Psoas muscle (tissue), 8 donors: ENCODE measurements at regions of chr21 and their contacts with region 1.

Region 1: GRCh38 chr21:35051287-35051818 is 2.3 kb upstream of the RUNX1 start:
- DNase-seq: peak; percentile 88 to 94
- ATAC-seq: peak; percentile 75 to 86 (median 80)
- H3K4me3 ChIP-seq: peak overlapping the region; percentile 41
- H3K27ac ChIP-seq: peak overlapping the region; percentile 96
- H3K4me1 ChIP-seq: peaks cover 39% of the 10 kb centered on the region
- H3K27me3 ChIP-seq: no peaks in the 10 kb centered on the region
- CTCF ChIP-seq: peak; percentile 71

Region 2: DNA sequence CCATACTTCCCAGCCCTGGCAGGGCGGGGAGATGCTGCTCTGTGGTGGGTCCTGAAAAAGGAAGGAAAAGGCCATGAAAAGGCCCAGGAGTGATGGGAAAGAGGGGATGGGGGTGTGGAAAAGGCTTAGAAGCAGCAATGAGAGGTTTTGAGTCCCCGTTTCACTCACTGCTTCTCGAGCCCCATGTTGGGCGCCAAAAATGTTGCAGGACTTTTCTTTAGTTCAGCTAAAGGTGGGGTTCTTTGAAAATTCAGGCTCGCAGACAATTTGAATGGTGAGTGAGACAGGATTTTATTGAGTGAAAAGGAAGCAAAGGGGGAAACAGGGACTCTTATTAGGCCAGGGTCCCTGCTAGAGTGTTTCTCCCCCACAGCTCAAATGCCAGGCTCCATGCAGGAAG is 884.9 kb before region 1 on chr21:
- intact Hi-C with region 1: no loop called
- DNase-seq: no peak
- ATAC-seq: no peak
- H3K4me3 ChIP-seq: no peak overlapping the region
- H3K27ac ChIP-seq: no peak overlapping the region
- H3K4me1 ChIP-seq: no peaks in the 10 kb centered on the region
- H3K27me3 ChIP-seq: no peaks in the 10 kb centered on the region
- CTCF ChIP-seq: no peak

Region 3: DNA sequence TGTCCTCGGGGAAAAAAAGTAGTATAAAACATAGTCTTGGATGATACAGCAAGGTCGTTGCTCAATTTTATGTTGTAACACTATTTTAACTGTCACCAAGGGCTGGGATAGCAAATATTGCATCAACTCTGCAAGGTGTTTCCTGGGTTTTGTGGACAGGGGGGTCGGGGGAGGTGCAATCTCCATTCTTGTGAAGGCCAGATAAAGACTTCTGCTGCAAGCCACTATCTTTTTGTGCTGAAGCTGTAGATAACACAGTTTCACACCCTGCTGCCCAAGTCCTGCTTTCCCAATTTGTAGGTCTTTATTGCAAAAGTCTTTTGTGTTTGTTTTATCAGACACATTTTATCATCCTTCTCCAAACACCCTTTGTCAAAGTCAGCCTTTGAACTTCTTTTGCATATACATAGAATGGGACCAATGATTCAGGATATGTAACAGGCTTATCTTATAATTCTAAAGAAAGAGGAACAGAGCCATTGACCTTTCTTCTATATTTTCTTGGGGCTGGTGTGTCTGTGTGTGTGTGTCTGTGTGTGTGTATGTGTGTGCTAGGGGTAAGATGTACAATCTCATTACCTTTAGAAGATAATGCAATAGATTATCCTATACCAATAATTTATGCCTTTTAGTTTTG is 142.8 kb before region 1 on chr21:
- intact Hi-C with region 1: no loop called
- DNase-seq: peak in 1 of 2 donors; percentile 51
- ATAC-seq: peak in 1 of 4 donors; percentile 21
- H3K4me3 ChIP-seq: no peak overlapping the region
- H3K27ac ChIP-seq: no peak overlapping the region
- H3K4me1 ChIP-seq: no peaks in the 10 kb centered on the region
- H3K27me3 ChIP-seq: peaks cover 0 to 5% (median 0%) of the 10 kb centered on the region in 3 donors
- CTCF ChIP-seq: no peak

Region 4: DNA sequence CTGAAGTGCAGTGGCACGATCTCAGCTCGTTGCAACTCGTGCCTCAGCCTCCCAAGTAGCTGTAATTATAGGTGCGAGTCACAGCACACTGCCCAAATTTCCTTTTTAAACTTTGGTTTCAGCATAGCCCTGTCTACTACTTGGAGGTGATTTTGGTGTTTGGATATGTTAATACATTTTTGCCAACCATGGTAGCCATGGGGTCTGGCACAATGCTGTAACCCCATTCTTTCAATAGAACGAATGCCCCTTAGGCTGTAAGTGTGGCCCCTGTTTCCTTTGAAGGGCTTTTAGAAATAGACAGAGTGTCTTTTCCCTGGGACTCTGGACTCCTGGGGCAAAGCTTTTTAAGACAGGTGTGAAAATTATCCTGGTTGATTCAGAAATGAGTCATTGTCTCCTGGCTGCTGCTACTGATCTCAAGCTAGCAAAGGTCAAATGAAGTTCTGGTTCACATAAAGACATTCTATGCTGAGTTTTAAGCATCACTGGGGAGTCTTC is 138.9 kb after region 1 on chr21:
- intact Hi-C with region 1: loop called in 1 of 2 experiments (anchors 5 kb)
- DNase-seq: no peak
- ATAC-seq: peak; percentile 77 to 93 (median 90)
- H3K4me3 ChIP-seq: no peak overlapping the region
- H3K27ac ChIP-seq: peak overlapping the region; percentile 82
- H3K4me1 ChIP-seq: peaks cover 40% of the 10 kb centered on the region
- H3K27me3 ChIP-seq: no peaks in the 10 kb centered on the region
- CTCF ChIP-seq: no peak

Region 5: DNA sequence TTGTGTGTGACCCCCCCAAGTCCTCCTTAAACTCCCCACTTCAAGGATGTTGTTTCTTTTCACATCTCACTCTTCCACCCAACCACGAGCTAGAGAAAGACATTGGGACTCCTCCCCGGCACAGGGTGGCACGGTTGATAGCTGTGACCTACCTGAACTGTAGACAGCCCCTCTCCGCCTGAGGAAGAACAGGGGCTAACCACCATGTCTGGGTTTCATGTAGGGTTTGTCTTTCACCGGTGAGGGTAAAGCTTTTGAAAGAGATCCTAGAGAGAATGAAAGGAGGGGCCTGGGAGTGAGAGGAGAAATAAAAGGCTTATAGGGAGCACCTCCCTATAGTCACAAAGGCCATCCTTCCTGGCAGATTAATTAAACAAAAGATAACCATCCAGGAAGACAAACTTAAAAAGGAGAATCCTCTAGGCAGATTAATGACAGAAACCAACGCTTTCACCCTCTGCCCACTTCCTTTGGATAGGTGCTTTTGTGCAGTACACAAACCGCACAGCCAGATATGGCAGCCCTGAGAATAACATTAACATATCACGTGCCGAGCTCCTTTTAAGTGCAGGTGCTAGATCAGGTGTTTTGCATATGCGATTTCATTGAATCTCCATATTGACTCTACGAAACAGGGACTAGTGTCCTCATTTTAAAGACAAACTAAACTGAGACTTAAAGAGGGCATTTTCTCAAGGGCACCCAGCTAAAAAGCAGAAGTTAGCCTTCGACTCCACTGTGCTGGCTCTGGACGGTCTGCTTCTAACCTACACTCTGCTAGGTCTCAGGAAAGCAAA is 175.8 kb after region 1 on chr21:
- intact Hi-C with region 1: loop called (anchors 2 to 10 kb)
- DNase-seq: no peak
- ATAC-seq: peak; percentile 9 to 34 (median 23)
- H3K4me3 ChIP-seq: peak overlapping the region; percentile 47
- H3K27ac ChIP-seq: peak overlapping the region; percentile 93
- H3K4me1 ChIP-seq: peaks cover 59% of the 10 kb centered on the region
- H3K27me3 ChIP-seq: no peaks in the 10 kb centered on the region
- CTCF ChIP-seq: no peak

Region 6: GRCh38 chr21:35366394-35367080 is 315.2 kb after region 1 on chr21:
- intact Hi-C with region 1: loop called in 1 of 2 experiments (anchors 10 kb)
- DNase-seq: no peak
- ATAC-seq: peak; percentile 89 to 94 (median 92)
- H3K4me3 ChIP-seq: no peak overlapping the region
- H3K27ac ChIP-seq: peak overlapping the region; percentile 89
- H3K4me1 ChIP-seq: peaks cover 22% of the 10 kb centered on the region
- H3K27me3 ChIP-seq: no peaks in the 10 kb centered on the region
- CTCF ChIP-seq: no peak

Region 7: GRCh38 chr21:36028127-36029069 is 977.0 kb after region 1 on chr21:
- intact Hi-C with region 1: loop called in 1 of 2 experiments (anchors 5 kb)
- DNase-seq: peak; percentile 62 to 81
- ATAC-seq: peak; percentile 86 to 95 (median 94)
- H3K4me3 ChIP-seq: no peak overlapping the region
- H3K27ac ChIP-seq: no peak overlapping the region
- H3K4me1 ChIP-seq: no peaks in the 10 kb centered on the region
- H3K27me3 ChIP-seq: no peaks in the 10 kb centered on the region
- CTCF ChIP-seq: peak; percentile 90

Region 8: GRCh38 chr21:36385233-36386030 is 1334.1 kb after region 1 on chr21 and contains the start of gene CHAF1B:
- intact Hi-C with region 1: no loop called
- DNase-seq: peak; percentile 83 to 91
- ATAC-seq: peak; percentile 87 to 91 (median 90)
- H3K4me3 ChIP-seq: peak within 1 kb of the TSS; percentile 79
- H3K27ac ChIP-seq: peak within 1 kb of the TSS; percentile 80
- H3K4me1 ChIP-seq: peaks cover 22% of the 10 kb centered on the region
- H3K27me3 ChIP-seq: no peaks in the 10 kb centered on the region
- CTCF ChIP-seq: no peak
- total RNA-seq, gene CHAF1B: 2.6 to 12.6 (median 8.1) TPM